ENCODE measurements at regions of chr1 and their contacts with region 1.

Region 1: DNA sequence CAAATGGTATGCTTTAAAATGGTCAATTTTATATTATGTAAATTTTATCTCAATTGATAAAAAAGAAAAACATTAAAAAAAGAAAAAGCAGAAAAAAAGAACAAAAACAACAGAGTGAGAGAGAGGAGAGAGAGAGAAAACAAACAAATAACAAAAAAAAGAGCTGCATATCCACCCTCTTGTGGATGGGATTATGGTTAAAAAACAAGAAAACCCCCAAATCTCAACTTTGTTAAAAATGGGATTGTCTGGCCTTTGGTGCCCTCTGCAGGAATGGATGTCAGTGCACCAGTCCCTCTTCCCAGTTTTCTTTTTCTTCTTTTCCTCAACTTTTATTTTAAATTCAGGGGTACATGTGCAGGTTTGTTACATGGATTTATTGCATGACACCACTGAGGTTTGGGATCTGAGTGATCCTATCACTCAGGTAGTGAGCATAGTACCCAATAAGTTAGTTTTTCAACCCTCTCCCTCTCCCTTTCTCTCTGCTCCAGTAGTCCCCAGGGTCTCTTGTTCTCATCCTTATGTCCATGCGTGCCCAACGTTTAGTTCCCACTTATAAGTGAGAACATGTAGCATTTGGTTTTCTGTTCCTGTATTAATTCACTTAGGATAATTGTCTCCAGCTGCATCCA is 28.1 kb downstream of the RNF187 start:
- DNase-seq: peak; percentile 55 to 60
- ATAC-seq: peak; percentile 47 to 83; a peak in 3 of 6 replicates
- H3K4me3 ChIP-seq: no peak overlapping the region
- H3K27ac ChIP-seq: no peak overlapping the region
- H3K4me1 ChIP-seq: no peaks in the 10 kb centered on the region
- CTCF ChIP-seq: peak; percentile 94
- EP300 ChIP-seq: no peak
- POLR2A ChIP-seq: no peak
- RAD21 ChIP-seq: peak; percentile 95

Region 2: DNA sequence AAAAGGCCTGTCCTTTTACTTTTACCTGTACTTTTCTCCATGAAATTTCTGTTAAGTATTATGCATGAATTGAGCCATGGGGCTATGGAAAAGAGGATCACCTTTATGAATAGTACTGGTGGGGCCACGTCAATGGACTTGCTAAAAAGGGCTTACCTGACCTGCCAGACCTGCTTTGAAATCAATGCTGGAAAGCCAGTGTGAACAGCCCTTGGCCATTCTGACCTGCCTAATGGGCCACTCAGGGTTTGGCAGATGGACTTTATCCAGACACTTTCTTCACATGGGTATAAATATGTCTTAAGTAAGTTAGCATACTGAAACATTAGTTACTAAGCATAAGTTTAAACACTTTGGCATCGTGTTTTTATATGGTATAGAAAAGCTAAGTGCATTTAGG is 383.6 kb before region 1 on chr1:
- CTCF ChIA-PET with region 1: interaction called, 27 read pairs
- POLR2A ChIA-PET with region 1: no interaction called
- DNase-seq: no peak
- ATAC-seq: no peak
- H3K4me3 ChIP-seq: no peak overlapping the region
- H3K27ac ChIP-seq: no peak overlapping the region
- H3K4me1 ChIP-seq: no peaks in the 10 kb centered on the region
- CTCF ChIP-seq: no peak
- EP300 ChIP-seq: no peak
- POLR2A ChIP-seq: no peak
- RAD21 ChIP-seq: no peak

Region 3: GRCh38 chr1:228378090-228378872 is 137.0 kb before region 1 on chr1:
- CTCF ChIA-PET with region 1: interaction called, 17 read pairs
- POLR2A ChIA-PET with region 1: no interaction called
- DNase-seq: peak; percentile 62 to 72
- ATAC-seq: peak; percentile 75 to 83
- H3K4me3 ChIP-seq: peak overlapping the region; percentile 51
- H3K27ac ChIP-seq: peak overlapping the region; percentile 78 to 82
- H3K4me1 ChIP-seq: peaks cover 9% of the 10 kb centered on the region; the same call in 2 of the 3 replicates
- CTCF ChIP-seq: peak; percentile 62
- EP300 ChIP-seq: no peak
- POLR2A ChIP-seq: peak; percentile 30; the same call in 1 of the 2 replicates
- RAD21 ChIP-seq: peak; percentile 65 to 66; a peak in 4 of 5 replicates

Region 4: DNA sequence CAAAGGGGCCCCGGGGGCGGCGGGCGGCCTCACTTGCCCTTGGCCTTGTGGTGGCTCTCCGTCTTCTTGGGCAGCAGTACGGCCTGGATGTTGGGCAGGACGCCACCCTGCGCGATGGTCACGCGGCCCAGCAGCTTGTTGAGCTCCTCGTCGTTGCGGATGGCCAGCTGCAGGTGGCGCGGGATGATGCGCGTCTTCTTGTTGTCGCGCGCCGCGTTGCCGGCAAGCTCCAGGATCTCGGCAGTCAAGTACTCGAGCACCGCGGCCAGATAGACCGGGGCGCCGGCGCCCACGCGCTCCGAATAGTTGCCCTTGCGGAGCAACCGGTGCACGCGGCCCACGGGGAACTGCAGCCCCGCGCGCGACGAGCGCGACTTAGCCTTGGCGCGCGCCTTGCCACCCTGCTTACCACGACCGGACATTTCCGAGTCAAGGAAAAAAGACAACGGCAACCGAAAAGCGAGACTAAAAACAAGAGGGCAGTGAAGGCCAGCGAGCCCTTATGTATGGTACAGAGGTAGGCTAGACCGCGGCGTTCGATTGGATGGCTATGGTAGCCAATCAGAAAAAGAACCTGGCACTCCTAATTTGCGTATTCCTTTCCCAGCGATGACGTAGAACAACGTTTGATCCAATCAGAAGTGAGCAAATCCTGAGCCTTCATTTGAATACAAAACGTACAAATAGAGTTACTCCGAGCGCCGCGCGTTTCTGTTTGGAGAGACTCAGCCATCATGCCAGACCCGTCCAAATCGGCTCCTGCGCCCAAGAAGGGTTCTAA is 57.7 kb before region 1 on chr1:
- CTCF ChIA-PET with region 1: interaction called, 16 read pairs
- POLR2A ChIA-PET with region 1: no interaction called
- DNase-seq: peak; percentile 71 to 94
- ATAC-seq: peak; percentile 68 to 83
- H3K4me3 ChIP-seq: peak overlapping the region; percentile 66
- H3K27ac ChIP-seq: peak overlapping the region; percentile 77 to 86
- H3K4me1 ChIP-seq: peaks cover 21% of the 10 kb centered on the region
- CTCF ChIP-seq: no peak
- EP300 ChIP-seq: no peak
- POLR2A ChIP-seq: peak; percentile 67
- RAD21 ChIP-seq: 0 out of 5 replicates have a peak, but pooled peaks of 1 of the 2 experiments have one; percentile 16

Region 5: DNA sequence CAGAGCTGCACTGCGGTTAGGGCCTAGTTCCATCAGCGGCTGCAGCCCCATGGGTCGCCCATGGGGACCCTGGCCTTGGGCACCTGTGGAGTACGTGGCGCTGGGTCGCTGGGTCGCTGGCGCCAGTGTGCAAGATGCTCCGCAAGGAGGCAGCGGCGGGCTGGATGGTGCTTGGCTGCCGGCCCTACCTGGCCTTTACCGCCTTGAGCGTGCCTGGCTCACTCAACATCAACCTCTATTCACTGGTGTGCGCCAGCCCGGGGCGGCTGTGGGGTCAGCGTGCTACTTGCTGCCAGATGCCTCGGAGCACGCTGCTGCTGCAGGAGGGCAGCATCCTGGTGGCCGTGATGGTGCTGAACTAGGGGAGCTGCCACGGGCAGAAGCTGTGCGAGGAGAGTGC is 134.8 kb after region 1 on chr1:
- CTCF ChIA-PET with region 1: no interaction called
- POLR2A ChIA-PET with region 1: no interaction called
- DNase-seq: no peak
- ATAC-seq: no peak
- H3K4me3 ChIP-seq: no peak overlapping the region
- H3K27ac ChIP-seq: no peak overlapping the region
- H3K4me1 ChIP-seq: peaks cover 14% of the 10 kb centered on the region
- CTCF ChIP-seq: no peak
- EP300 ChIP-seq: no peak
- POLR2A ChIP-seq: no peak
- RAD21 ChIP-seq: no peak